ENCODE measurements at regions of chr18 and their contacts with region 1.

Region 1: GRCh38 chr18:64037812-64038414 is 68.0 kb downstream of the SERPINB8 start:
- DNase-seq: no peak
- ATAC-seq: peak; percentile 91
- H3K4me3 ChIP-seq: no peak overlapping the region
- H3K27ac ChIP-seq: no peak overlapping the region
- H3K4me1 ChIP-seq: no peaks in the 10 kb centered on the region
- H3K27me3 ChIP-seq: no peaks in the 10 kb centered on the region
- CTCF ChIP-seq: peak; percentile 38 to 63 (median 57); a peak in 5 of 6 replicates
- EP300 ChIP-seq: no peak
- POLR2A ChIP-seq: no peak
- RAD21 ChIP-seq: peak; percentile 71

Region 2: GRCh38 chr18:64017870-64018269 is 20.0 kb before region 1 on chr18:
- CTCF ChIA-PET with region 1: interaction called, 57 read pairs
- POLR2A ChIA-PET with region 1: interaction called, 3 read pairs
- RAD21 ChIA-PET with region 1: interaction called, 8 read pairs
- SMC1A ChIA-PET with region 1: interaction called, 34 read pairs
- in situ Hi-C with region 1: no loop called
- intact Hi-C with region 1: no loop called
- DNase-seq: no peak
- ATAC-seq: peak; percentile 68
- H3K4me3 ChIP-seq: no peak overlapping the region
- H3K27ac ChIP-seq: no peak overlapping the region
- H3K4me1 ChIP-seq: no peaks in the 10 kb centered on the region
- H3K27me3 ChIP-seq: no peaks in the 10 kb centered on the region; a peak in 1 of 4 replicates
- CTCF ChIP-seq: peak; percentile 32 to 60 (median 45); a peak in 5 of 6 replicates
- EP300 ChIP-seq: no peak
- POLR2A ChIP-seq: no peak
- RAD21 ChIP-seq: peak; percentile 78

Region 3: DNA sequence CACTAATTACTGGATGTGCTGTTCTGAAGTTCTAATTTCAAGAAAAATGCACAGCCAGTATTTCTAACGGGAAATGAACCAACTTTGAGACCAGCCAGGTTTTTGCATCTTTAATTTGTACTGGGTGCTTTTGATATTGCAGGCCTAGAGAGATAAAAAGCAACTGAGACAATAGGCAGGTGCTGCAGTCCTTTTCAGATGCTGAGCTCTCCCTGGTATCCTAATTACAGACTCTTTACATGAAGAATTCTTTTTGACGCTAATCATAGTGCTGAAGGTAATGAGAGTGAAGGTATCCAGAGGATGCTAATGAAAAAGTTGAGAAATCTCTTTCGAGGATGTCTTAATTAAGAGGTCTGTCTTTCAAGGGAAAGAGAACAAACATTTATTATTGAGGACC is 17.1 kb after region 1 on chr18:
- CTCF ChIA-PET with region 1: interaction called, 8 read pairs
- POLR2A ChIA-PET with region 1: no interaction called
- RAD21 ChIA-PET with region 1: interaction called, 4 read pairs
- SMC1A ChIA-PET with region 1: interaction called, 3 read pairs
- in situ Hi-C with region 1: no loop called
- intact Hi-C with region 1: loop called (anchors 2 kb)
- DNase-seq: no peak
- ATAC-seq: no peak
- H3K4me3 ChIP-seq: no peak overlapping the region
- H3K27ac ChIP-seq: no peak overlapping the region
- H3K4me1 ChIP-seq: no peaks in the 10 kb centered on the region
- H3K27me3 ChIP-seq: no peaks in the 10 kb centered on the region
- CTCF ChIP-seq: no peak
- EP300 ChIP-seq: no peak
- POLR2A ChIP-seq: no peak
- RAD21 ChIP-seq: no peak

Region 4: GRCh38 chr18:64330161-64330560 is 292.2 kb after region 1 on chr18:
- CTCF ChIA-PET with region 1: interaction called, 11 read pairs
- POLR2A ChIA-PET with region 1: no interaction called
- RAD21 ChIA-PET with region 1: interaction called, 14 read pairs
- SMC1A ChIA-PET with region 1: interaction called, 11 read pairs
- in situ Hi-C with region 1: no loop called
- intact Hi-C with region 1: loop called (anchors 2 kb)
- DNase-seq: no peak
- ATAC-seq: peak; percentile 90
- H3K4me3 ChIP-seq: no peak overlapping the region
- H3K27ac ChIP-seq: no peak overlapping the region
- H3K4me1 ChIP-seq: no peaks in the 10 kb centered on the region
- H3K27me3 ChIP-seq: no peaks in the 10 kb centered on the region
- CTCF ChIP-seq: peak in 2 of 3 experiments; percentile 19 to 38; a peak in 3 of 6 replicates
- EP300 ChIP-seq: no peak
- POLR2A ChIP-seq: no peak
- RAD21 ChIP-seq: peak; percentile 60

Region 5: DNA sequence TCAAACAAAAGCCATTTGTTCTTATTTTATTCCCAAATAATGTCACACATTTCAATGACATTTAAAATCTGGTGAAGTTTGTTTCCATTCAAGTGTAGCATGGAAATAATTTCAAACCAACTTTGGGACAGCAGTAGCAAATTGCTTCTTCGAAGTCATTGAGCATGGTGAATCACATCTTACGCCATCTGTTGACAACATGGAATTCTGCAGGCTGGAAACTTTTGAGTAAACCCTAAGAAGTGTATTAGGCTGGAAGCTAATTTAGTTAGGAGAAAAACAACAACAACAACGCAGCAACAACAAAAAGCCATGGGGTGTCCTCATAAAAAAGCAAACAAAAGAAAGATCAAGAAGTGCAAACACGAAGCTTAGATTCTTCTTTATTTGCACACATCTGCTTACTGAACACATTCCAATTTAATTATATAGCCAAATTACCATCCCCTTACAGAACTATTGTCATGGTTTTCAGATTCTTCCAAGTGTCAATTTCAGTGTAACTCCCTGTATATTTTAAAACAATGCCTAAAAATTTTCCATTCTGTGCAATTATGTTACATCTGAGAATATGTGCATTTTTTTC is 1053.9 kb after region 1 on chr18:
- CTCF ChIA-PET with region 1: interaction called, 6 read pairs
- POLR2A ChIA-PET with region 1: no interaction called
- RAD21 ChIA-PET with region 1: no interaction called
- SMC1A ChIA-PET with region 1: no interaction called
- in situ Hi-C with region 1: loop called (anchors 25 kb)
- intact Hi-C with region 1: loop called (anchors 5 kb)
- DNase-seq: no peak
- ATAC-seq: peak; percentile 63; the same call in 2 of the 3 replicates
- H3K4me3 ChIP-seq: no peak overlapping the region
- H3K27ac ChIP-seq: no peak overlapping the region
- H3K4me1 ChIP-seq: no peaks in the 10 kb centered on the region
- H3K27me3 ChIP-seq: no peaks in the 10 kb centered on the region
- CTCF ChIP-seq: peak; percentile 35 to 46 (median 40); a peak in 5 of 6 replicates
- EP300 ChIP-seq: no peak
- POLR2A ChIP-seq: no peak
- RAD21 ChIP-seq: no peak